HepG2 (cell line): ENCODE measurements at regions of chr11 and their contacts with region 1.

Region 1: GRCh38 chr11:2741377-2742131 is 41.8 kb upstream of the KCNQ1OT1 start:
- DNase-seq: no peak
- ATAC-seq: peak; percentile 61
- H3K4me3 ChIP-seq: peak overlapping the region; percentile 16 to 40 (median 24); a peak in 3 of 6 replicates
- H3K27ac ChIP-seq: no peak overlapping the region
- H3K4me1 ChIP-seq: peaks cover 60% of the 10 kb centered on the region
- H3K27me3 ChIP-seq: peaks cover 10 to 43% of the 10 kb centered on the region in 2 experiments; a peak in 4 of 5 replicates
- CTCF ChIP-seq: 0 out of 2 replicates have a peak, but pooled peaks have one; percentile 6
- EP300 ChIP-seq: no peak
- POLR2A ChIP-seq: no peak
- RAD21 ChIP-seq: no peak

Region 2: GRCh38 chr11:2675540-2675939 is 66.0 kb before region 1 on chr11:
- CTCF ChIA-PET with region 1: no interaction called
- POLR2A ChIA-PET with region 1: no interaction called
- in situ Hi-C with region 1: no loop called
- intact Hi-C with region 1: no loop called
- DNase-seq: no peak
- ATAC-seq: peak; percentile 16
- H3K4me3 ChIP-seq: no peak overlapping the region
- H3K27ac ChIP-seq: no peak overlapping the region
- H3K4me1 ChIP-seq: peaks cover 94% of the 10 kb centered on the region
- H3K27me3 ChIP-seq: no peaks in the 10 kb centered on the region
- CTCF ChIP-seq: no peak
- EP300 ChIP-seq: no peak
- POLR2A ChIP-seq: 0 out of 4 replicates have a peak, but pooled peaks of 1 of the 2 experiments have one; percentile 30
- RAD21 ChIP-seq: no peak

Region 3: GRCh38 chr11:2699531-2700414 is 41.8 kb before region 1 on chr11 and contains the start of gene KCNQ1OT1:
- CTCF ChIA-PET with region 1: no interaction called
- POLR2A ChIA-PET with region 1: interaction called, 15 read pairs
- in situ Hi-C with region 1: no loop called
- intact Hi-C with region 1: no loop called
- DNase-seq: peak; percentile 95
- ATAC-seq: peak; percentile 90
- H3K4me3 ChIP-seq: peak within 1 kb of the TSS; percentile 95
- H3K27ac ChIP-seq: peak within 1 kb of the TSS; percentile 95
- H3K4me1 ChIP-seq: peaks cover 57% of the 10 kb centered on the region
- H3K27me3 ChIP-seq: peaks cover 0 to 3% of the 10 kb centered on the region in 2 experiments; a peak in 2 of 5 replicates
- CTCF ChIP-seq: peak; percentile 35; the same call in 1 of the 2 replicates
- EP300 ChIP-seq: peak in 1 of 2 experiments; percentile 4; a peak in 1 of 4 replicates
- POLR2A ChIP-seq: peak in 1 of 2 experiments; percentile 99; a peak in 2 of 4 replicates
- RAD21 ChIP-seq: peak; percentile 46; the same call in 1 of the 2 replicates
- total RNA-seq, gene KCNQ1OT1: 2.5 and 18.9 TPM in 2 replicates

Region 4: DNA sequence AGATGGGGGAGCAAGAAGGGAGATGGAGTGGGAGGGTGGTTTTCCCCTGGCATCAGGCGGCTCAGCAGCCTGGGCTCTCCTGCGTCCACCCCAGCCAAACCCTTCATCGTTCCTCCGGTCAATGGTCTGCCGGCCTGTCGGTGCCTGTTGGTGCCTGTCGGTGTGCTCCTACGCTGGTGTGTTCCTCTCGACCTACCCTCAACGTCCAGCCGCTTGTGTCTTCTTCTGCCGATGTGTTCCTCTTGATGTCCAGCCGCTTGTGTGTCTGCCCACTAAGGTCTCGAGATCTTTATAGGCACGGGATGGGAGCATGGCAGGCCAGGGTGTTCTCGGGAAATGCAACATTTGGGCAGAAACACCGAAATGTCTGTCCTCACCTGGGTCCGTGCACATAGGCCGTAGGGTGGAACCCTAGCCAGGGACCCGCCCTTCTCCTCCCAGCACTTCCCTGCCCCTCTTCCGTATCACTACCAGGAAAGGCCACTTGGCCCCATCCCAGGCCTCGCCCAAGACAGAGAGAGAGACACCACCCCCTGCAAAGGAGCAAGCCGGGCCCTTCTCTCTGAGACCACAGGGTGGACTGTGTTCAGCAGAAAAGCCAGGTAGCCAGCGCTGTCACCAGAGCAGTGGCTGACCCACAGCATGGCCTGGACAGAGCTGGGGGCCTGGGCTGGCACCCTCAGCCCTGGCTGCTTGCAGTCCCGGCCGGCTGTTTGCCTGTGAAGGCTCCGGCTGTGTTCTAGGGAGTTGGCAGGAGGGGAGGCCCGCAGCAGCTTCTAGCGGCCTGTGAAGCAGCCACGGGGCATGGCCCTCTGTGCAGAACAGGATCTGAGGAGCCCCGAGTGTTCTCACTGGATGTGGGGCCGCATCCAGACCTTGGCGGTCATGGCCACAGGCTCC is 19.8 kb after region 1 on chr11:
- CTCF ChIA-PET with region 1: no interaction called
- POLR2A ChIA-PET with region 1: no interaction called
- in situ Hi-C with region 1: no loop called
- intact Hi-C with region 1: no loop called
- DNase-seq: no peak
- ATAC-seq: peak; percentile 69
- H3K4me3 ChIP-seq: no peak overlapping the region
- H3K27ac ChIP-seq: no peak overlapping the region
- H3K4me1 ChIP-seq: 0 out of 2 replicates have a peak, but pooled peaks cover 8% of the 10 kb centered on the region
- H3K27me3 ChIP-seq: peaks cover 6 to 44% of the 10 kb centered on the region in 2 experiments
- CTCF ChIP-seq: no peak
- EP300 ChIP-seq: no peak
- POLR2A ChIP-seq: no peak
- RAD21 ChIP-seq: no peak